ENCODE measurements at regions of chr2 and their contacts with region 1.

Region 1: GRCh38 chr2:207951734-207952470 is 73.4 kb downstream of the PLEKHM3 start:
- DNase-seq: no peak
- H3K4me3 ChIP-seq: no peak overlapping the region
- H3K4me3 Mint-ChIP-seq: no peak overlapping the region
- H3K27ac Mint-ChIP-seq: peak overlapping the region; percentile 68
- H3K4me1 ChIP-seq: peaks cover 65% of the 10 kb centered on the region
- H3K4me1 Mint-ChIP-seq: peaks cover 43% of the 10 kb centered on the region
- H3K27me3 ChIP-seq: no peaks in the 10 kb centered on the region
- H3K27me3 Mint-ChIP-seq: no peaks in the 10 kb centered on the region
- CTCF ChIP-seq: no peak

Region 2: DNA sequence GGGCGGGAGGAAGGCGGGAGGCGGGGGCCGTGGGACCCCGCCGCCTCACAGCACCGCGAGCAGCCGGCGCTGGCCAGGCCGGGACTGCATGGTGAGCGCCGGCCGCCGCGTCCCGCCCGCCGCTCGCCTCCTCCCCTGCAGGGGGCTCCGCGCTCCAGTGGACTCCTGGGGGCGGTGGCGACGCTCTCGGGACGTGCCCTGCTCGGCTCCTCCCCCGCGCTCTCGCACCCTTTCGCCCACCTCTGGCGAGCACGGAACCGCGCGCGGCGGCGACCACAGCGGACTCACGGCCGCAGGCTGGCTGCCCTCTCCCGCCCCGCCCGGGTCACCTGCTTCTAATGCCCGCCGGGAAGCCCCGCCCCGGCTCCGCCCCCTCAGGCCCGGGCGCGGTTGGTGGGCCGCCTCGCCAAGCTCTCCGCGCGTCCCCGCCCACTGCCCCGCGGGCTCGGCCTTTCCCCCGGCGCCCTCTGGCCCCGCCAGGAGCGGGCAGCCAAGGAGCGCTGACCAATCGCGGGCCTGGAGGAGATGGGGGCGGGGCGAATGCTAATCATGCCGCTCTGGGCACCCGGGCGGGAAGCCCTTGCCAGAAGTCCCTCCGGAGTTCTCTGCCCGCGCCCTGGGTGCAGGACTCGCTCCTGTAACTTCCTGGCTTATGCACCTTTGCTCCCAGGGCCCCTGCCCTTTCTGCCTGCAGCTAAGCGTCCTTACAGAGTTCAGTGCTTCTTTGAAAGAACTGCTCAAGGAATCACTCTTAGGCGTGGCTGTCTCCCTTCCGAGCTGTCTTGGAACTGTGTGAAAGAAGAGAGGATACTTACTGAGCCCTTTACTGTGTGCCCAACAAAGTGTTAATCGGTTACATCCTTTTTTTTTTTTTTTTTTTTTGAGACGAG is 182.1 kb before region 1 on chr2 and contains the start of gene FZD5:
- CTCF ChIA-PET with region 1: interaction called, 3 read pairs
- POLR2A ChIA-PET with region 1: interaction called, 3 read pairs
- intact Hi-C with region 1: loop called (anchors 5 kb)
- DNase-seq: peak; percentile 99 to 100
- H3K4me3 ChIP-seq: peak within 1 kb of the TSS; percentile 81
- H3K4me3 Mint-ChIP-seq: peak within 1 kb of the TSS; percentile 96
- H3K27ac Mint-ChIP-seq: peak within 1 kb of the TSS; percentile 88
- H3K4me1 ChIP-seq: peaks cover 60% of the 10 kb centered on the region
- H3K4me1 Mint-ChIP-seq: peaks cover 48% of the 10 kb centered on the region
- H3K27me3 ChIP-seq: no peaks in the 10 kb centered on the region
- H3K27me3 Mint-ChIP-seq: no peaks in the 10 kb centered on the region
- CTCF ChIP-seq: peak; percentile 64 to 68
- total RNA-seq, gene FZD5: 59.1 and 61.4 TPM in 2 replicates

Region 3: GRCh38 chr2:207873794-207874193 is 78.1 kb before region 1 on chr2:
- CTCF ChIA-PET with region 1: no interaction called
- POLR2A ChIA-PET with region 1: no interaction called
- intact Hi-C with region 1: no loop called
- DNase-seq: no peak
- H3K4me3 ChIP-seq: no peak overlapping the region
- H3K4me3 Mint-ChIP-seq: no peak overlapping the region
- H3K27ac Mint-ChIP-seq: no peak overlapping the region
- H3K4me1 ChIP-seq: peaks cover 32% of the 10 kb centered on the region
- H3K4me1 Mint-ChIP-seq: peaks cover 6% of the 10 kb centered on the region
- H3K27me3 ChIP-seq: no peaks in the 10 kb centered on the region
- H3K27me3 Mint-ChIP-seq: no peaks in the 10 kb centered on the region
- CTCF ChIP-seq: no peak

Region 4: DNA sequence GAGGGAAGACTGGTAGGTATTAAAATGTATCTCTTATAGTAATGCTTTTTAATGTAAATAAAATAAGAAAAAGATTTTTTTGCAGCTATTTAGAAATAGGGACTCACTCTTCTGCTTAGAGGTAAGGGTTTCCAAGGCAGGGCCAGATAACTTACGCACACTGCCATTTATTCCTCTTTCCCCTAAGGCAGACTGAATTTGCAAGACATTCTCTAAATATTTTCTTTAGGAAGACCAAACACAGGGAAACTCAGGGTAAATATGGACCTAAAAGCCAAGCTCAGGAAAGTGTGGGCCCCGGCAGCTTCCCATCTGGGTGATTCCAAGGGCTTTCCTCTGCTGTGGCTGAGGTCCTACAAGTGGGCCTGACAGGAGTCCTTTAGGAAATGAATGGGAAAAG is 39.2 kb before region 1 on chr2:
- CTCF ChIA-PET with region 1: no interaction called
- POLR2A ChIA-PET with region 1: no interaction called
- intact Hi-C with region 1: loop called (anchors 2 kb)
- DNase-seq: peak in 1 of 2 experiments; percentile 33
- H3K4me3 ChIP-seq: no peak overlapping the region
- H3K4me3 Mint-ChIP-seq: peak overlapping the region; percentile 21
- H3K27ac Mint-ChIP-seq: peak overlapping the region; percentile 91
- H3K4me1 ChIP-seq: peaks cover 23% of the 10 kb centered on the region
- H3K4me1 Mint-ChIP-seq: peaks cover 22% of the 10 kb centered on the region
- H3K27me3 ChIP-seq: no peaks in the 10 kb centered on the region
- H3K27me3 Mint-ChIP-seq: no peaks in the 10 kb centered on the region
- CTCF ChIP-seq: no peak

Region 5: DNA sequence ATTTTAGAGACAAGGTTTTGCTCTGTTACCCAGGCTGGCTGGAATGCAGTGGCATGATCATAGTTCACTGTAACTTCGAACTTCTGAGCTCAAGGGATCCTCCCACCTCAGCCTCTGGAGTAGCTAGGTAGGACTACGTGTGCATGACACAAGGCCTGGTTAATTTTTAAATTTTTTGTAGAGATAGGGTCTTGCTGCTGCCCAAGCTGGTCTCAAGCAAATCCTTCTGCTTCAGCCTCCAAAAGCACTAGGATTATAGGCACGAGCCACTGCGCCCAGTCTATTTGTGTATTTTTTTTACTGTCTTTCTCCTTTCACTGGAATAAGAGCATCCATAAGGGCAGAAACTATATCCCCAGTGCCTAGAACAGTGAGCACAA is 15.9 kb before region 1 on chr2:
- CTCF ChIA-PET with region 1: no interaction called
- POLR2A ChIA-PET with region 1: interaction called, 10 read pairs
- intact Hi-C with region 1: loop called (anchors 1 kb)
- DNase-seq: peak; percentile 50 to 75
- H3K4me3 ChIP-seq: no peak overlapping the region
- H3K4me3 Mint-ChIP-seq: no peak overlapping the region
- H3K27ac Mint-ChIP-seq: peak overlapping the region; percentile 72
- H3K4me1 ChIP-seq: peaks cover 73% of the 10 kb centered on the region
- H3K4me1 Mint-ChIP-seq: peaks cover 51% of the 10 kb centered on the region
- H3K27me3 ChIP-seq: no peaks in the 10 kb centered on the region
- H3K27me3 Mint-ChIP-seq: no peaks in the 10 kb centered on the region
- CTCF ChIP-seq: no peak

Region 6: GRCh38 chr2:208013285-208014178 is 61.6 kb after region 1 on chr2:
- CTCF ChIA-PET with region 1: no interaction called
- POLR2A ChIA-PET with region 1: no interaction called
- intact Hi-C with region 1: loop called (anchors 1 kb)
- DNase-seq: peak; percentile 32 to 53
- H3K4me3 ChIP-seq: no peak overlapping the region
- H3K4me3 Mint-ChIP-seq: no peak overlapping the region
- H3K27ac Mint-ChIP-seq: no peak overlapping the region
- H3K4me1 ChIP-seq: peaks cover 43% of the 10 kb centered on the region
- H3K4me1 Mint-ChIP-seq: peaks cover 10% of the 10 kb centered on the region
- H3K27me3 ChIP-seq: no peaks in the 10 kb centered on the region
- H3K27me3 Mint-ChIP-seq: no peaks in the 10 kb centered on the region
- CTCF ChIP-seq: no peak

Region 7: DNA sequence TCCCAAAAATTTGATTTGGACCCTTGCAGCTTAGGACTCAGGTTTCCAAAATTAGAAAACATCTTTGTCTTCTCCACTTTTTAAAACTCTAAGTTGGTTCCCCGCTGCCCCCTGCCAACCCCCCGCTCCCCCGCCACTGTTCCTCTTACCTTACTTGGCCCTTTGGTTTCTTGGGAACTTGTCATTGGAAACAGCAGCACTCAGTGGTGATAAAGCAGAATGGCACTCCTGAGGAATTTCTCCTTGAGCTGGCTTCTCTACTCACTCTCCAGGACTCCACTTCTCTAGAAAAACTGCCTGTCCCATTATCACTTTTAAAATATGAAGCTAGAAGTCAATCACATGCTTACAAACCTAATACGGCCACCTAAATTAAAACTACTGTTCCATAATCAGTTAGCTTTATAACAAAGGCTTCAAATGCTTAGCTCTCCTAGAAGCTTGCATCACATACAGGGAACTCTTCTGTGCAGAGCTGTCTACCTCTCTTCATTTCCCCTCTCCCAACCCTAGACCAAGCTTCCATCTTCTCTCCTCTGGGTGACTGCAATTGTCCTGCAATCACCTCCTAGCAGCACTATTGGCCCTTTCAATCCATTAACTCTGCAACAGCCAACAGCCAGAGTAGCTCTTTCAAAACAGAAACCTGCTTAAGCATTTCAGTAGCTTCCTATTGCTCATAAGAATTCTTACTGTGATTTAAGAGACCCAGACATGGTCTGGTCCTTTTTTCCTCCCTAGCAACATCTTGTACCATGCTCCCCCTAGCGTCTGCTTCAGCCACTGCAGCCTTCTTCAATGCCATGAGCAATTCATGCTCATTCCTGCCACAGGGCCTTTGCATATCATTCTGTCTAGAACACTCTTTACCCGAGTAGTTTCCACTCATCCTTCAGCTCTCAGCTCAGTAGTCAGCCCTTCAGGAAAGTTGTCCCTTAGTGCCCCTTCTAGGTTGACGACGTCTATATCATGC is 88.6 kb after region 1 on chr2:
- CTCF ChIA-PET with region 1: interaction called, 10 read pairs
- POLR2A ChIA-PET with region 1: no interaction called
- intact Hi-C with region 1: loop called (anchors 1 kb)
- DNase-seq: peak; percentile 80 to 83
- H3K4me3 ChIP-seq: no peak overlapping the region
- H3K4me3 Mint-ChIP-seq: no peak overlapping the region
- H3K27ac Mint-ChIP-seq: peak overlapping the region; percentile 24
- H3K4me1 ChIP-seq: peaks cover 20% of the 10 kb centered on the region
- H3K4me1 Mint-ChIP-seq: peaks cover 26% of the 10 kb centered on the region
- H3K27me3 ChIP-seq: no peaks in the 10 kb centered on the region
- H3K27me3 Mint-ChIP-seq: no peaks in the 10 kb centered on the region
- CTCF ChIP-seq: peak; percentile 73 to 81

Measured in Caco-2 (cell line).